ENCODE measurements at regions of chr11 and their contacts with region 1.

Region 1: GRCh38 chr11:8720995-8721674 is 38.5 kb downstream of the RPL27A start:
- DNase-seq: peak; percentile 88 to 90
- H3K4me3 ChIP-seq: no peak overlapping the region
- H3K4me3 Mint-ChIP-seq: peak overlapping the region; percentile 57
- H3K27ac Mint-ChIP-seq: peak overlapping the region; percentile 90
- H3K4me1 ChIP-seq: peaks cover 82% of the 10 kb centered on the region
- H3K4me1 Mint-ChIP-seq: peaks cover 62% of the 10 kb centered on the region
- H3K27me3 ChIP-seq: no peaks in the 10 kb centered on the region
- H3K27me3 Mint-ChIP-seq: no peaks in the 10 kb centered on the region
- CTCF ChIP-seq: no peak

Region 2: DNA sequence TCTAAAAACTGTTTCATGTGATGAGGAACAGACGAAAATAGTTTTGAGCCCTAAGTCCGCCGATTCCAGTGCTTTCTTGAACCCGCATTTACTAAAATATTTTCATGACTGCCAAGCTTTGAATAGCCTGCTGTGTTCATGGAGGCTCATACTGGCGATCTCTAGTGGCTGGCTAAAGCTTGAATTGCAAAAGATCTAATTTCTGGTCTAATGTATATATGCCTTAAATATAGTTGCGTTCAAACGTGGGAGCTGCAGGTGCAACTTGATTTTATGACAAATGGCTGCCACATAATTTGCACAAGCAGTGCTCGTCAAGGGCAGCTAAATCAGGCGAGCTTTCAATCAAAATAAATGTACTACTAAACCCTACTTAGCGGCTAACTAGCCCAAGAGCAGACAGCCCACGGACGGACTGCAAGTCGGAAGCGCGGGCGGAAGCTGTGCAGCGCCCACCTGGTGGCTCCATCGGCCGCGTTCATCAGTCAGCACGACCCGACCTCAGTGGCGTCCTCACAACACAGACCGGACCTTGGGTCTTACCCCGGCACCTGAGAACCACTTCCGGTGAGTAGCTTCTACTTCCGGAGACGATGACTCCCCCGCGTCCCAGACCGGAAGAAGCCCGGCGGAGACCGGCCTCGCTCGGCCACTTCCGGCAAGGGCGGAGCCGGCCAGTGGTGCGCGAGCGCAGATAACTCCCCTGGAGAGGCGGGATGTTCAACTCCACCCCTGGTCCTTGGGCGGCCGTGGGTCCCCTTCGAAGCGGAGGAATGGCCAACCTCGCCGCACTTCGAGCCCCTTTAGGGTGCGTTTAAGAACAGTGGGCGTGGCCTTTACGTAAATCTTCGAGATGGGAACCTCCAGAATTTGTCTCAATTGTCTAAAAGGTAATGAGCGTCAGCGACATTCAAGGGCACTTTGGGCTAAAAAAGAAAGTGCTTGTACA is 32.4 kb before region 1 on chr11:
- CTCF ChIA-PET with region 1: interaction called, 3 read pairs
- POLR2A ChIA-PET with region 1: interaction called, 7 read pairs
- intact Hi-C with region 1: loop called (anchors 1 kb)
- DNase-seq: peak; percentile 97 to 99
- H3K4me3 ChIP-seq: peak overlapping the region; percentile 54
- H3K4me3 Mint-ChIP-seq: peak overlapping the region; percentile 67
- H3K27ac Mint-ChIP-seq: peak overlapping the region; percentile 7
- H3K4me1 ChIP-seq: peaks cover 35% of the 10 kb centered on the region
- H3K4me1 Mint-ChIP-seq: peaks cover 34% of the 10 kb centered on the region
- H3K27me3 ChIP-seq: no peaks in the 10 kb centered on the region
- H3K27me3 Mint-ChIP-seq: no peaks in the 10 kb centered on the region
- CTCF ChIP-seq: peak in 1 of 2 experiments; percentile 62

Region 3: DNA sequence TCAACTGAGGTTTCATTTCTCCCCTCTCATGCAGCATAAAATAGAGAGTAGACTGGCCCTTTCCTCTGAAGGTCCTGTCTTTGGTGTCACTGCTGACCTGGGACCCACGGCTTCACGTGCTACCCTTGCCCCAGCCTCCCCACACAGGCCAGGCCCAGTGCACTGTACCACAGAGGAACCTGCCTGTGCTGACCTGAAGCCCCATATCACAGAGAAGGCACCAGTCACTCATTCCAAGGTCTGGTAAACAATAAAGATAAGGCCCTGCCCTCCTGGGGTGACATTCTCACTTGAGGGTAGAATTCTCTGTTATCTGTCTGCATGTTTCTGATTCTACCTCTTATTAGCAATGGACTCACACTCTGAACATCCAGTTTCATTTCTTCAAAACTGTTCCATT is 12.7 kb after region 1 on chr11:
- CTCF ChIA-PET with region 1: no interaction called
- POLR2A ChIA-PET with region 1: no interaction called
- intact Hi-C with region 1: loop called (anchors 1 kb)
- DNase-seq: peak; percentile 52 to 68
- H3K4me3 ChIP-seq: no peak overlapping the region
- H3K4me3 Mint-ChIP-seq: no peak overlapping the region
- H3K27ac Mint-ChIP-seq: peak overlapping the region; percentile 86
- H3K4me1 ChIP-seq: peaks cover 31% of the 10 kb centered on the region
- H3K4me1 Mint-ChIP-seq: peaks cover 7% of the 10 kb centered on the region
- H3K27me3 ChIP-seq: no peaks in the 10 kb centered on the region
- H3K27me3 Mint-ChIP-seq: no peaks in the 10 kb centered on the region
- CTCF ChIP-seq: no peak

Region 4: DNA sequence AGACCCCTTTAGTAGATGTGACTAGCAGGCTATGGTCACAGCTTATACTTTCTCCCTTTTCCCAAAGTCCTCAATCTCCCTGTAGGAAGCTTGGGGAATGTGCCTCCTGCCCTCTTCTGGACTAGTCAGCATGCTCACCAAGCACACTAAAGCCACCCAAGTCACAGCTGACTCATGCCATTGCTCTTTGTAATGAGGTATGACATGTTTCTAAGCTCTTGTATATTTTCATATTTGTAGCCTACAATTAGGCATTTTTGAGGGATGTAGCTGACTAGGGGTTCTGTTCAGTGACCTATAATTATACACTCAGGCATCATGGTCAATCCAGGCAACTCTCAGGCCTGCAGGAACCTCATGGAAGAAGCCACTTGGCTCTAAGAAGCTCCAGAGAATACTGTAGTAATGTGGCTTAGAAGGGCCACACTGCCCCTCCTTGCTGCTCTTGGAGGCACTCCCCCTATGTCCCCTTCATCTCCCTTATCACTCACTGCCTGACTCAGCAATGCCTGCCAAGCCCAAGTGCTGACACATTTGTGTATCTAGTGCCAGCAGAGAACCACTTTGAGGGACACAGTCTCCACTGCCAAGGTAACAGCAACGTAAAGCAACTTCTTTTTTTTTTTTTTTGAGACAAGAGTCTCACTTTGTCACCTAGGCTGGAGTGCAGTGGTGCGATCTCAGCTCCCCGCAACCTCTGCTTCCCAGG is 47.6 kb after region 1 on chr11:
- CTCF ChIA-PET with region 1: no interaction called
- POLR2A ChIA-PET with region 1: no interaction called
- intact Hi-C with region 1: loop called (anchors 1 kb)
- DNase-seq: peak; percentile 43 to 55
- H3K4me3 ChIP-seq: no peak overlapping the region
- H3K4me3 Mint-ChIP-seq: no peak overlapping the region
- H3K27ac Mint-ChIP-seq: no peak overlapping the region
- H3K4me1 ChIP-seq: peaks cover 14% of the 10 kb centered on the region; the same call in 1 of the 2 replicates
- H3K4me1 Mint-ChIP-seq: peaks cover 12% of the 10 kb centered on the region
- H3K27me3 ChIP-seq: no peaks in the 10 kb centered on the region
- H3K27me3 Mint-ChIP-seq: no peaks in the 10 kb centered on the region
- CTCF ChIP-seq: peak in 1 of 2 experiments; percentile 60

Region 5: DNA sequence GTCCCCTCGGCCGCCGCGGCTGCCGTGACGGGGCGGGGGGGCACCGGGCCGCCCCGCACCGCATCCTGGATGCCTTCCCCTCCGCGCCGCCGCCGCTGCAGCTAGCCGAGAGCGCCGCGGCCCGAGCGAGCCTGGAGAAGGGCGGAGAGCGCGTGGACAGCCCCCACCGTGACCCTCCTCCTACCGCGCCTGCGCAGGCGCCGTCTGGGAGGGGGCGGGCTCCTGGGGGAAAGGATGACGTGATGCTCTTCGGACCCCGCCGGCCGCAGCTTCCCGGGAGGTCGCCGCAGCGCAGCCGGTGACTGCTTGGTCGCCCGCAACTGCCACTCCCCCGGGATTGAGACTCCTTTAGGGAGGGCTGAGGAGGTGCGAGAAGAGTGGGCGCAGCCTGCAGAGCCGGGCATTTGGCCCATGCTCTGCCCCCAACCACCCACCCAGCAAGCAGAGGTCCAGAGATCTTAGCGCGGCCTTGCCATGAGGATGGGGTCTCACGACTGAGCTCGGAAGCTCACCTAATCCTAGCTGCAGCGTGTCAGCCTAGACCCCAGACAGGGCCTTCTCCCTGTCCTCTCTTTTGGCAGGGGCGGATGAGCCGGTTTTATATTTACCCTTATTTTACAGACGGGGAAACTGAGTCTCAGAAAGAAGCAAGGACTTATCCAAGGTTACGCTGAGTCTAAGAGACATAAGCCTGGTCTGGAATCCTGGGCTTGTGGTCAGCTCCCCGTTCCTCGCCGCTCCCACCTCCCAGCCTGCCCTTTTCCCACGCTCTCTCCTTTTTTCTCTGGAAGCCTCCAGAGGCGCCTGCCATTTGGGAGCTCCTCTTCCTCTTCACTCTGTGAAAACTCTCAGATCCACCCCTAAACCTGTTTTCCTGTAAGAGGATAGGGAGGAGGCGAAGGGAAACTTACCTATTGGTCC is 544.3 kb after region 1 on chr11 and contains the start of gene DENND5A:
- CTCF ChIA-PET with region 1: no interaction called
- POLR2A ChIA-PET with region 1: interaction called, 10 read pairs
- intact Hi-C with region 1: no loop called
- DNase-seq: peak; percentile 84 to 91
- H3K4me3 ChIP-seq: peak within 1 kb of the TSS; percentile 83
- H3K4me3 Mint-ChIP-seq: peak within 1 kb of the TSS; percentile 94
- H3K27ac Mint-ChIP-seq: peak within 1 kb of the TSS; percentile 95
- H3K4me1 ChIP-seq: peaks cover 30% of the 10 kb centered on the region
- H3K4me1 Mint-ChIP-seq: peaks cover 47% of the 10 kb centered on the region
- H3K27me3 ChIP-seq: no peaks in the 10 kb centered on the region
- H3K27me3 Mint-ChIP-seq: no peaks in the 10 kb centered on the region
- CTCF ChIP-seq: no peak
- total RNA-seq, gene DENND5A: 54.3 and 58.0 TPM in 2 replicates

Measured in Caco-2 (cell line).